Endothelial cell of umbilical vein (primary cell): ENCODE measurements at regions of chr4 and their contacts with region 1.

Region 1: GRCh38 chr4:184441461-184442392 is 32.6 kb downstream of the IRF2 start:
- DNase-seq: peak; percentile 74
- H3K4me3 ChIP-seq: peak overlapping the region in 1 of 3 experiments; percentile 19
- H3K27ac ChIP-seq: peak overlapping the region; percentile 44
- H3K4me1 ChIP-seq: peaks cover 15% of the 10 kb centered on the region
- H3K27me3 ChIP-seq: no peaks in the 10 kb centered on the region
- CTCF ChIP-seq: no peak
- POLR2A ChIP-seq: no peak

Region 2: DNA sequence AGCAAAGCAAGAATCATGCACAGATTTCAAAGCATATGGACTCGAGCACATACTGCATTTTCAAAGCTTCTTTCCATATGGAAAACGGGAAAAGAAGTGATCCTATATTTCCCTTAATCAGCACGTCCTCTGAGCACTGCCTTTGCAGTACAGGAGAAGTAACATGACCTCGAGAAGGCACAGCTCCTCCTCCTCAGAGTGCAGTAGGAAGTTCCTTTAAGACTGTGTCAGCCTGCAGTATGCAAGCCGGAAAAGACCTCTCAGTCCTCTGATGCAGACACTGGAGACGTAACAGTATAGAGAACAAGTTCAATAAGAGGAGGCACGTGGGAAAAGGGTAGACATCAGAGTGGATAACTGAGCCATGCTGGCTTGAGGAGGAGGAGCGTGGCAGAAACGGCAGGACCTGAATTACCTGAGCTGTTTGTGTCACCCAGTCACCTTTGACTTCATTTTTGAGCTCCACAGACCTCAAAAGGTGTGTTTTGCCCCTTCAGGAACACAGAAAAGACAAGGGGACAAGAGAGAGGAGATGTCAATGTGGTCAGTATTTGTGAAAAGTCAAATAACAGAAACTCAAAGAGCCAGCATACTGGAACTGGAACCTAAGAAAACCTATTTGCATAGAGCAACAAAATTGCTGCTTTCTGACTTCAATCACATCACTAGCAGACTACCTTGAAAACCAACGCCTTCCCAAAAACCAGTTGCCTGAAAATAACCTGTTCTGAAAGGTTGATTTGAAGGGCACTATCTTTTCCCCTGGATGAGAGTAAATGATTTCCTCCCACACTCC is 11.8 kb after region 1 on chr4:
- CTCF ChIA-PET with region 1: interaction called, 4 read pairs
- POLR2A ChIA-PET with region 1: no interaction called
- dilution Hi-C with region 1: no loop called
- intact Hi-C with region 1: loop called (anchors 1 kb)
- DNase-seq: peak; percentile 80
- H3K4me3 ChIP-seq: no peak overlapping the region
- H3K27ac ChIP-seq: peak overlapping the region; percentile 54
- H3K4me1 ChIP-seq: peaks cover 42% of the 10 kb centered on the region
- H3K27me3 ChIP-seq: no peaks in the 10 kb centered on the region
- CTCF ChIP-seq: no peak
- POLR2A ChIP-seq: no peak